ENCODE measurements at regions of chr20 and their contacts with region 1.

Region 1: DNA sequence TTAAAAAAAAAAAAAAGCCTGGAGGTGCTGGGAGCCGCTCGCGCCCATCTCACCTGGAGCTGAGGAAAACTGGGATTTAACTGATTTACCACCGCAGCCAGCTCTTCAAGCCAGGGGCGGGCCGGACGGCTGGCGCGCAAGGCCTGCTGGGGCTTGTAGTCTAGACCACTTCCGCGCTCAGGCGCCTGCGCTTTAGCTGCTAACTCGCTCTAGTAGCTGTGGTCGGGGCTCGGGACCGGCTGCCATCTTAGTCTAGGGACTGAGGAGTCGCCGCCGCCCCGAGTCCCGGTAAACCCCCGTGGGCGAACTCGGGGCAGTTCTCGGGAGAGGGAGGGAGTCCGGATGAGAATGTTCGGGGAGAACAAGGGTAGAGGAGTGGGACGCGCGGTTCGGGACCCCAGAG is at the start of gene ITCH:
- DNase-seq: peak; percentile 82 to 91 (median 88)
- ATAC-seq: peak; percentile 100
- H3K4me3 ChIP-seq: peak within 1 kb of the TSS; percentile 93
- H3K4me3 Mint-ChIP-seq: peak within 1 kb of the TSS; percentile 96 to 100 (median 98)
- H3K27ac ChIP-seq: peak within 1 kb of the TSS; percentile 98
- H3K27ac Mint-ChIP-seq: peak within 1 kb of the TSS; percentile 91 to 100 (median 98)
- H3K4me1 ChIP-seq: peaks cover 25 to 38% of the 10 kb centered on the region in 2 donors
- H3K4me1 Mint-ChIP-seq: peaks cover 26 to 50% (median 45%) of the 10 kb centered on the region in 7 donors
- H3K27me3 ChIP-seq: no peaks in the 10 kb centered on the region
- H3K27me3 Mint-ChIP-seq: peaks cover 0 to 3% (median 0%) of the 10 kb centered on the region in 5 donors
- total RNA-seq, gene ITCH: 50.8 to 70.4 (median 60.5) TPM

Region 2: GRCh38 chr20:33554914-33555420 is 808.1 kb before region 1 on chr20:
- CTCF ChIA-PET with region 1: no interaction called
- POLR2A ChIA-PET with region 1: no interaction called
- intact Hi-C with region 1: loop called in 1 of 2 experiments (anchors 5 kb)
- DNase-seq: peak in 7 of 9 donors; percentile 72 to 92 (median 88)
- ATAC-seq: peak; percentile 98
- H3K4me3 ChIP-seq: peak overlapping the region; percentile 3
- H3K4me3 Mint-ChIP-seq: peak overlapping the region; percentile 51 to 83 (median 75)
- H3K27ac ChIP-seq: peak overlapping the region; percentile 81
- H3K27ac Mint-ChIP-seq: peak overlapping the region; percentile 90 to 98 (median 95)
- H3K4me1 ChIP-seq: peaks cover 16% of the 10 kb centered on the region in 2 donors
- H3K4me1 Mint-ChIP-seq: peaks cover 15 to 49% (median 39%) of the 10 kb centered on the region in 7 donors
- H3K27me3 ChIP-seq: no peaks in the 10 kb centered on the region
- H3K27me3 Mint-ChIP-seq: no peaks in the 10 kb centered on the region

Region 3: GRCh38 chr20:34403908-34404307 is 40.8 kb after region 1 on chr20:
- CTCF ChIA-PET with region 1: no interaction called
- POLR2A ChIA-PET with region 1: no interaction called
- intact Hi-C with region 1: loop called (anchors 1 to 2 kb)
- DNase-seq: no peak
- ATAC-seq: no peak
- H3K4me3 ChIP-seq: no peak overlapping the region
- H3K4me3 Mint-ChIP-seq: peak overlapping the region in 6 of 10 donors; percentile 1 to 42 (median 28)
- H3K27ac ChIP-seq: no peak overlapping the region
- H3K27ac Mint-ChIP-seq: peak overlapping the region; percentile 2 to 82 (median 29)
- H3K4me1 ChIP-seq: peaks cover 18 to 28% of the 10 kb centered on the region in 2 donors
- H3K4me1 Mint-ChIP-seq: peaks cover 23 to 77% (median 64%) of the 10 kb centered on the region in 7 donors
- H3K27me3 ChIP-seq: no peaks in the 10 kb centered on the region
- H3K27me3 Mint-ChIP-seq: no peaks in the 10 kb centered on the region

Region 4: DNA sequence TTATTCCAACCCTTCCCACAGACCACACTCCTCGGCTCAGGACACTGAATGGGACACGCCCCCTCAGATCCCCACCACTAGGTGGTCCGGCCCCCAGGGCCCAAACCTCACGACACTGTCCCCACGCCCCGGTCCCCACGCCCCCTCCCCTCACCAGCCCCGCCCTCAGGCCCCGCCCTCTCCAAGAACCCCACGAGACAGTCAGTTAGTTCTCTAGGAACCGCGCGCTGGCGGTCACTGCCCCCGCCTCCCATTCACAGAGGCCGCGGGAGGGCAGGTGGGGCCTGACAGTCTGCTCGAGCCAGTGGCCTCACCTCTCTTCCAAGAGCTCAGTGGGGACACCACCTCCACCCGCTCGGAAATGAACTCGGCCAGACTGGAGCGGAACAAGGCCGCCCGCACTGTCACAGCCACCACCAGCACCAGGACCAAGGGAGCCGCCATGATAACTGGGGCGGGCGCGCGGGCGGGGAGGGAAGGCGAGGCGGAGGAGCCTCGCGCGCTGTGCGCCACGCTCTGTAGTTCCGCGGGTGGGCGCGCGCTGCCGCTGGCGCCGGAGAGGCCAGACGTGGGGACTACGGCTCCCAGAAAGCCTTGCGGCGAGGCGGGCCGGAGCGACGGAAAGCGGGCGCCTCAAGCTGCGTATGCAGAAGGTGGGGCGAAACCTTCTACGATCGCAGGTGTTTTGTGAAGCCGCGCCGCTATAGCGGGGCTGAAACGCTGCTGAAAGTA is 313.7 kb after region 1 on chr20 and contains the start of gene PIGU:
- CTCF ChIA-PET with region 1: no interaction called
- POLR2A ChIA-PET with region 1: no interaction called
- intact Hi-C with region 1: loop called in 1 of 2 experiments (anchors 1 kb)
- DNase-seq: peak; percentile 88 to 97 (median 96)
- ATAC-seq: peak; percentile 99
- H3K4me3 ChIP-seq: peak within 1 kb of the TSS; percentile 63
- H3K4me3 Mint-ChIP-seq: peak within 1 kb of the TSS; percentile 95 to 99 (median 96)
- H3K27ac ChIP-seq: peak within 1 kb of the TSS; percentile 95
- H3K27ac Mint-ChIP-seq: peak within 1 kb of the TSS; percentile 85 to 98 (median 97)
- H3K4me1 ChIP-seq: peaks cover 4 to 5% of the 10 kb centered on the region in 2 donors
- H3K4me1 Mint-ChIP-seq: peaks cover 14 to 37% (median 24%) of the 10 kb centered on the region in 7 donors
- H3K27me3 ChIP-seq: no peaks in the 10 kb centered on the region
- H3K27me3 Mint-ChIP-seq: no peaks in the 10 kb centered on the region
- total RNA-seq, gene PIGU: 8.6 to 21.3 (median 16.1) TPM

Region 5: GRCh38 chr20:34825530-34826362 is 462.7 kb after region 1 on chr20 and contains the start of gene NCOA6:
- CTCF ChIA-PET with region 1: no interaction called
- POLR2A ChIA-PET with region 1: no interaction called
- intact Hi-C with region 1: loop called (anchors 1 kb)
- DNase-seq: peak; percentile 56 to 86 (median 74)
- ATAC-seq: peak; percentile 90
- H3K4me3 ChIP-seq: peak within 1 kb of the TSS; percentile 78
- H3K4me3 Mint-ChIP-seq: peak within 1 kb of the TSS; percentile 83 to 100 (median 98)
- H3K27ac ChIP-seq: peak within 1 kb of the TSS; percentile 76
- H3K27ac Mint-ChIP-seq: peak within 1 kb of the TSS; percentile 85 to 95 (median 91)
- H3K4me1 ChIP-seq: peaks cover 16 to 17% of the 10 kb centered on the region in 2 donors
- H3K4me1 Mint-ChIP-seq: peaks cover 30 to 50% (median 43%) of the 10 kb centered on the region in 7 donors
- H3K27me3 ChIP-seq: no peaks in the 10 kb centered on the region
- H3K27me3 Mint-ChIP-seq: peaks cover 0 to 17% (median 0%) of the 10 kb centered on the region in 5 donors
- total RNA-seq, gene NCOA6: 23.6 to 31.9 (median 29.3) TPM